ENCODE measurements at regions of chr13 and their contacts with region 1.

Region 1: GRCh38 chr13:39616087-39616694 is 13.2 kb upstream of the LHFPL6 start:
- DNase-seq: peak; percentile 74
- H3K4me3 ChIP-seq: no peak overlapping the region
- H3K27ac ChIP-seq: no peak overlapping the region
- H3K4me1 ChIP-seq: no peaks in the 10 kb centered on the region
- H3K27me3 ChIP-seq: no peaks in the 10 kb centered on the region
- CTCF ChIP-seq: peak; percentile 64 to 87 (median 74)
- EP300 ChIP-seq: no peak
- POLR2A ChIP-seq: no peak

Region 2: DNA sequence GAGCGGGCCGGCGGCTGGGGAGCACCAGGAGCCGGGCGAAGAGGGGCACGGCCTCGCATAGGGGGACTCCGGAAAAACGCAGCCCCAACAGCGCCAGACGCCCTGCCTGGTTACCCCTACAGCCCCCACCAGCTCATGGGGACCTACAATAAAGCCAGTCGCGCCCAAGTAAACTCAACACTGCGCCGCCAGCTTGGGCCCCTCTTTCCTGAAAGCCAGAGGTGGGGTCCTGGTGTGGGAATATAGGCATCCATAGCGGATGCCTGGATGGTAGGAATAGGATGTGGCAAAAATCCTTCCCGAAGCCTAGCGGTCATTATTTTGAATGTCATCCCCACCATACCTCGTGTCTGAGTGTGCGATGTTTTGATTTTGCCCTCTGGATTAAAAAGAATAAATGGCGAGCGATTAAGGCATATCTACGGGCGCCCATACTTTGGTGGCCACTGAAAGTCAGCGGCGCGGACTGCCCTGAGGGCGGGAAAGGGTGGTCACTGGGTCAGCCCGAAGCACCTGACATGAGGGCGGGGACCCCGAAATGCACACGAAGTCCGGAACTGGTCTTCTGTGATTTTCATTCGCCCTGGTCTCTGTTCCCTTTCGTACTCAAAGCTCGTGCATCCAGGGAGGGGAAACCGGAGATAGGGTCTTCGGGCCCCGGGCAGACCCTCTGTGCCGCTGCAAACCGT is 578.2 kb before region 1 on chr13 and contains the starts of genes NHLRC3 and PROSER1:
- intact Hi-C with region 1: loop called (anchors 5 kb)
- DNase-seq: peak; percentile 95
- H3K4me3 ChIP-seq: peak within 1 kb of the TSS; percentile 87 to 99 (median 94)
- H3K27ac ChIP-seq: peak within 1 kb of the TSS; percentile 86 to 87 (median 86)
- H3K4me1 ChIP-seq: peaks cover 0 to 60% (median 48%) of the 10 kb centered on the region in 4 donors
- H3K27me3 ChIP-seq: no peaks in the 10 kb centered on the region
- CTCF ChIP-seq: no peak
- EP300 ChIP-seq: peak in 1 of 4 donors; percentile 11
- POLR2A ChIP-seq: peak in 1 of 2 donors; percentile 34
- total RNA-seq, gene NHLRC3: 14.5 to 16.9 (median 15.7) TPM
- total RNA-seq, gene PROSER1: 12.2 to 13.7 (median 13.1) TPM

Region 3: GRCh38 chr13:39144941-39145533 is 471.2 kb before region 1 on chr13:
- intact Hi-C with region 1: loop called (anchors 2 kb)
- DNase-seq: peak; percentile 77
- H3K4me3 ChIP-seq: no peak overlapping the region
- H3K27ac ChIP-seq: no peak overlapping the region
- H3K4me1 ChIP-seq: no peaks in the 10 kb centered on the region
- H3K27me3 ChIP-seq: peaks cover 0 to 7% (median 0%) of the 10 kb centered on the region in 3 donors
- CTCF ChIP-seq: peak; percentile 34 to 69 (median 46)
- EP300 ChIP-seq: no peak
- POLR2A ChIP-seq: no peak

Region 4: DNA sequence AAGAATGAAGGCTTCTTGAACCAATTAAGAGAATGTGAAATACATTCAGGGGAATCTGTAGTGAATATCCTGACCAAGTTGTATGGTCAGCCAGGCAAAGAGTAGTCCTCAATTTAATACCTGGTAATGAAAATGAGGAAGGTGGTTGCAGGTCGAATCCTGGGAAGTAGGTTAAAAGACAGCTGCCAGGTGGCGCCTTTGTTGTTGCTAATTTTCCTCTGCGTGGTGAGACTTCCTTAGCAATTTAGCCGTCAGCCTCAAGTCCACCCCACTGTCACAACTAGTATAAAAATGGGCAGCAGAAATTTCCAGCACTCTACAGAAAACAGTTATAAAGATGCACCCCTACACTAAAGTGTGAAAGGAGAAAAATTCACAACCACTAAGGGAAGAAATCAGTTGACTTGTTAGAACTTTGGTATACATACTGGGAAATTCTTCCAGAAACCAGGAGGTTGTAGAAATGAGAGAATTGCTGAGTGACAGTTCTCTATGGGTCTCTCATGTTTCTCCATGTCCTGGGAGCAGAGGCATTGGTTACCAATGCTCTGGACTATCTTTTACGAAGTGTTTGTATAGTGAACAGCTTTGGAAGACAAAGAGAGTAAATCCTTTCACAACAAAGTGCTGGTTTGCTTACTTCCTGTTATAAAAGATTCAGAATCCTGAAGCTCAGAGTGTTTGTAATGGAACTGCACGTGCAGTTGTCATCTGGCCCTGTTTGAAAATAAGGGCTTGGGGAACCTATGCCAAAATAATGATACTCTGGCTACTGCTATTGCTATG is 342.0 kb before region 1 on chr13:
- intact Hi-C with region 1: loop called (anchors 5 kb)
- DNase-seq: no peak
- H3K4me3 ChIP-seq: no peak overlapping the region
- H3K27ac ChIP-seq: no peak overlapping the region
- H3K4me1 ChIP-seq: peaks cover 0 to 7% (median 0%) of the 10 kb centered on the region in 4 donors
- H3K27me3 ChIP-seq: no peaks in the 10 kb centered on the region
- CTCF ChIP-seq: no peak
- EP300 ChIP-seq: no peak
- POLR2A ChIP-seq: no peak

Region 5: GRCh38 chr13:39835253-39835652 is 219.1 kb after region 1 on chr13:
- intact Hi-C with region 1: no loop called
- DNase-seq: no peak
- H3K4me3 ChIP-seq: no peak overlapping the region
- H3K27ac ChIP-seq: no peak overlapping the region
- H3K4me1 ChIP-seq: no peaks in the 10 kb centered on the region
- H3K27me3 ChIP-seq: no peaks in the 10 kb centered on the region
- CTCF ChIP-seq: no peak
- EP300 ChIP-seq: no peak
- POLR2A ChIP-seq: no peak

Measured in sigmoid colon (tissue), 7 donors.